WTC11 (cell line): ENCODE measurements at regions of chr3 and their contacts with region 1.

Region 1: DNA sequence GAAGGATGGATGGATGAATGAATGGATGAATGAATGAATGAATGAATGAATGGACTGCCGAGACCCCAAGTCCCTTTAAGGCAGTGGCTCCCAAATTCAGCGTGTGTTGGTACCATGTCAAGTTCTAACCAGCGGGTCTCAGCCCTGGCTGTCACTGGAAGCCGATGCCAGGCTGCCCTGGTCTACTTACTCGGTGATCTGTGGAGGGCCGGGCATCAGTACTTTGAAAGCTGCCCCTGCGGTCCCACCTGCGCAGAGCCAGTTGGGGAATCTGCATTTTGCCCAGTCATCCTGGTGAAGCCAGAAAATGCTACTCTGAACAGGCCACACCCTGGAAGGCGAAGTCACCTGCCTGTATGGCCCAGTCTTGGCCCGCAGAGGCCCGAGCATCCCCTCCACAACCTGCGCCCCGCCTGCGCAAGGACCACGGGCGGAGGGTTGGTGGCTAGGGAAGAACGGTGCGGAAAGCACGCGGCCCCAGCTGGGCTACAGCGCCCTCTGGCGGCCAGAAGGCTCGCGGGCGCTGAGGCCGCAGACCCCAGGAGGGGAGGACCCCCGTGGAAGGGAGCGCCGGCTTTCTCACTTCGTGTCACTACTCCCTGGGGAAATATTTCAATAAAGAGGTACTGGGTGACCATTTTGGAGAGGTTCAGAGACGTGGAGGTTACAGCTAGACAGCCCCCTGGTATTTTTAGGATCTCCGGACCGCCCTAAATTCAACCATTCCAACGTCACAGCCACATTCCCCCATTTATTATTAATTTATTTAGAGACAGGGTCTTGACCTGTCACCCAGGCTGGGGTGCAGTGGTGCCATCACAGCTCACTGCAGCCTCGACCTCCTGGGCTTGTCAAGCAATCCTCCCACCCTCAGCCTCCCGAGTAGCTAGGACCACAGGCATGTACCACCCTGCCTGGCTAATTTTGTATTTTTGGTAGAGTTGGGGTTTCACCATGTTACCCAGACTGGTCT is 34.9 kb downstream of the PRKCD start:
- DNase-seq: peak; percentile 80
- ATAC-seq: peak; percentile 74
- H3K4me3 Mint-ChIP-seq: no peak overlapping the region
- H3K27ac Mint-ChIP-seq: no peak overlapping the region
- H3K4me1 Mint-ChIP-seq: peaks cover 27% of the 10 kb centered on the region
- H3K27me3 Mint-ChIP-seq: peaks cover 9% of the 10 kb centered on the region; the same call in 1 of the 2 replicates
- CTCF ChIP-seq: peak; percentile 98

Region 2: GRCh38 chr3:53114011-53114400 is 81.9 kb before region 1 on chr3:
- CTCF ChIA-PET with region 1: interaction called, 34 read pairs
- POLR2A ChIA-PET with region 1: interaction called, 5 read pairs
- DNase-seq: peak; percentile 85
- ATAC-seq: peak; percentile 87
- H3K4me3 Mint-ChIP-seq: no peak overlapping the region
- H3K27ac Mint-ChIP-seq: no peak overlapping the region
- H3K4me1 Mint-ChIP-seq: no peaks in the 10 kb centered on the region; the same call in 1 of the 2 replicates
- H3K27me3 Mint-ChIP-seq: no peaks in the 10 kb centered on the region
- CTCF ChIP-seq: peak; percentile 95

Region 3: GRCh38 chr3:53130179-53131061 is 65.5 kb before region 1 on chr3 and contains the start of gene RFT1:
- CTCF ChIA-PET with region 1: interaction called, 48 read pairs
- POLR2A ChIA-PET with region 1: no interaction called
- DNase-seq: peak; percentile 98
- ATAC-seq: peak; percentile 80
- H3K4me3 Mint-ChIP-seq: peak within 1 kb of the TSS; percentile 85
- H3K27ac Mint-ChIP-seq: peak within 1 kb of the TSS; percentile 92
- H3K4me1 Mint-ChIP-seq: peaks cover 12% of the 10 kb centered on the region
- H3K27me3 Mint-ChIP-seq: no peaks in the 10 kb centered on the region
- CTCF ChIP-seq: no peak
- total RNA-seq, gene RFT1: 26.3 to 28.0 TPM (median 27.1 TPM) in 3 replicates

Region 4: GRCh38 chr3:53155760-53156159 is 40.1 kb before region 1 on chr3:
- CTCF ChIA-PET with region 1: interaction called, 22 read pairs
- POLR2A ChIA-PET with region 1: interaction called, 7 read pairs
- DNase-seq: no peak
- ATAC-seq: no peak
- H3K4me3 Mint-ChIP-seq: no peak overlapping the region
- H3K27ac Mint-ChIP-seq: no peak overlapping the region
- H3K4me1 Mint-ChIP-seq: peaks cover 28% of the 10 kb centered on the region
- H3K27me3 Mint-ChIP-seq: peaks cover 15% of the 10 kb centered on the region
- CTCF ChIP-seq: no peak

Region 5: DNA sequence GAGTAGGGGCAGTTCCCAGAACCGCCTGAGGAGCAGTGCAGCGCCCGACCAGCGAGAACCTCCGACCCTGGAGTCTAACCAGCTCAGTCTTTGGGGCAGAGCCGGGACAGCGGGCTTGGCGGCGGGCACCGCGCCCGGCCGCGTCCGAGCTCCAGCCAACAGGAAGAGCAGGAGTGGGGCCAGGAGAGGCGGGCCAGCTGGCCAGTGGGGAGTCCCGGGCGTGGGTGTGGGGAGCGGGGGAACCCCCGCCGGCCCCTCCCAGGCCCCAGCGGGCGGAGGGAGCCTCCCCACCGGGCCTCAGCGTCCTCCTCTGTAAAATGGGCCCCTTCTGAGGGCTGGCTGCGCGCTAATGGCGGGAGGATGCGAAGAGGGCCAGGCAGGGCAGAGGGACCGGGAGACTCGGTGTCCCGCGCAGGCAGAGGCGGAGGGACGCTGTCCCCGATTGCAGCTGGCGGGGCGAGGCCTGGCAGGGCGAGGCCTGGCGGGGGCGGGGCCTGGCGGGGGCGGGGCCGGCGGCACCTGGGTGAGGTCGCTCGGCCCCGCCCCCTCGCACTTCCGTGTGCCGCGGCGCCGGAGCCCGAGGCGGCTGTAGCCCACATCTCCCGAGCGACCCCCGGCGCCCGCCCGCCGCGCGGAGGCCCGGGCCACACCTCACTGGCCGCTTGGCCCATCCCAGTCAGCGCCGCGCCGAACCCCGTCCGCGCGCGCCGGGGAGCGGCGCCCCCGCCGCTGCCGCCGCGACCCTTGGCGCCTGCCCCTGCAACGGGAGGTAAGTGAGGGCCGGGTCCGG is 35.0 kb before region 1 on chr3 and contains the start of gene PRKCD:
- CTCF ChIA-PET with region 1: interaction called, 22 read pairs
- POLR2A ChIA-PET with region 1: interaction called, 7 read pairs
- DNase-seq: peak; percentile 81
- ATAC-seq: peak; percentile 76
- H3K4me3 Mint-ChIP-seq: peak within 1 kb of the TSS; percentile 86
- H3K27ac Mint-ChIP-seq: no peak within 1 kb of the TSS
- H3K4me1 Mint-ChIP-seq: peaks cover 40% of the 10 kb centered on the region
- H3K27me3 Mint-ChIP-seq: peaks cover 18% of the 10 kb centered on the region
- CTCF ChIP-seq: no peak
- total RNA-seq, gene PRKCD: 16.7 to 19.2 TPM (median 18.0 TPM) in 3 replicates

Region 6: DNA sequence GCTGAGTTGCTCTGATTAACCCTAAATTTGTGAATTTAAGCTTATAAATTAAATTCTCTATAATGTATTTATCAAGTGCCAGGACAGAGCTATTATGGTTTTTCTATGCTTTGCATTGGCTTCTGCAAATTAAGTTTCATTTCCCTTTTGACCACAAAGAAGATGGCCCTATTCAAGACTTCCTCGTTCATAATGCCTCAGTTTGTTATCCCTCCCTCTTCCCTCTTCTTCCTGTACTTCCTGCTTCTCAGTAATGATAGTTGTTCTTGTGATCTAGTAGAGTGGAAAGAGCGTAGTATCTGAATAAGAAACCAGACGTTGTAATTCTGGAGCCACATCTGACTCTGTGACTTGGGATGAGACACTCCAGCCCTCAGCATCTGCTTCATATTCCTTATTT is 417.2 kb after region 1 on chr3:
- CTCF ChIA-PET with region 1: no interaction called
- POLR2A ChIA-PET with region 1: no interaction called
- DNase-seq: no peak
- ATAC-seq: no peak
- H3K4me3 Mint-ChIP-seq: no peak overlapping the region
- H3K27ac Mint-ChIP-seq: no peak overlapping the region
- H3K4me1 Mint-ChIP-seq: peaks cover 15% of the 10 kb centered on the region
- H3K27me3 Mint-ChIP-seq: no peaks in the 10 kb centered on the region
- CTCF ChIP-seq: no peak